Heart right ventricle (tissue), 16 donors: ENCODE measurements at regions of chr16 and their contacts with region 1.

Region 1: DNA sequence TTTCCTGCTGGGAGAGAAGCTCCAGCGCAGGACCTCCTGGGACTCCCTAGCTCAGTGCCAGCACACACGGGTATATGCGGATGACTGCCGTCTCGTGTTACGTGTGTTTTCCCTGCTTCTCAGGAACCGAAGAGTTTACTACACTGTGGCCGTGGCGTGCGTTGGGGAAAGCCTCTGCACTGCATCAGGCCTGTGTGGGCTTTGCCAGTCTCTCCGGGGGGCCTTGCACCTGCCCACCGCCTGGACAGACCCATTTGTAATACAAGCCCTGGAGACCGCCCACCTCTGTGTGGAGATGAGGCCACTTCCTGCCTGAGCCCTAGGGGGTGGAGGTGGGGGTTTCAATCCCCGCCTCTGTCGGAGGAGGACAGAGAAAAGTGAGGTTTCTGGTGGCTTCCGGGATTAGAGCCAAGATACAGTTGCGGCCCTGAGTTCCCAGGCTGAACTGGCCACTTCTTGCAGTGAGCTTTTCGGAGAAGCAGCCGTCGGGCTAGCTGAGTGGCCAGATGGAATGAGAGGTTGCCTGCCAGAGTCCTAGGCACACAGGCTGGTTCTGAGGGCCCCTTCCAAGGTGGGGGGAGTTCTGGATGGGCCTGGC is 43.4 kb upstream of the GSE1 start:
- DNase-seq: no peak
- ATAC-seq: no peak
- H3K4me3 ChIP-seq: peak overlapping the region in 1 of 10 donors; percentile 16
- H3K27ac ChIP-seq: peak overlapping the region in 2 of 10 donors; percentile 15 to 76
- H3K4me1 ChIP-seq: peaks cover 16 to 77% (median 33%) of the 10 kb centered on the region in 9 donors
- H3K27me3 ChIP-seq: no peaks in the 10 kb centered on the region
- CTCF ChIP-seq: no peak

Region 2: DNA sequence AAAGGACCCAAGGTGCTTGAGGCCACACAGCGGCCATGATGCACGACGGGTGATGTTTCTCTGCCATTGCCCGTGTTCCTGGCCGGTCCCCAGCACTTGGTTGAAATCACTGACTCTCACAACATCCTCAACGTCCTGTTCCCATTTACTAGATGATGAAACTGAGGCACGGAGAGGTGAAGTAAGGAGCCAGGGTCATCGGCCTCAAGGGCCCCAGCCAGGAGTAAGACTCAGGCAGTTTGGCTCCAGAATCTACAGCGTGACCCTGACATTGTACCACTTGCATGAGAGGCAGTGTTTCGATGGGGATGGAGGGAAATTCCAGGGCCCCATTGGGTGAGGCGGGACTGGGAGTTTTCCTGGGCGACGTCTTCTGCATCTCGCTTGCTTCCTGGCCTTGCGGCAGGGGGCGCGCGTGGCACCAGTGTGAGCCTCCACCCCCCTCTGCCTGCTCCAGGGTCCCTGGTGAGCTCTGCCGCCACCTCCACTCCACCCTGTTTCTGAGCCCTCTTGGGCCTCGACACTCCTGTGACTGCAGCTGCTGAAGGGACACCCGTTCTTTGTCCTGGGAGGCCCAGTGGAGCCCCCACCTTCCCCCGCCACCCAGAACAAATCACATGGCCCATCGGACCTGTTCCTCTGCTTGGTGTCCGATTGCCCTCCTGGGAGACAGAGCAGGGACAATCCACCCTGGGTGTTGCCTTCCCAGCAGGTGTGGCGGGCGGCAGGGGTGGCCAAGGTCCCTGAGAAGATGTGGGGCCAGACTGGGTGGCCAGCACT is 89.6 kb before region 1 on chr16:
- intact Hi-C with region 1: no loop called
- DNase-seq: peak in 1 of 2 donors; percentile 40
- ATAC-seq: peak in 6 of 8 donors; percentile 15 to 32 (median 28)
- H3K4me3 ChIP-seq: no peak overlapping the region
- H3K27ac ChIP-seq: no peak overlapping the region
- H3K4me1 ChIP-seq: peaks cover 0 to 3% (median 0%) of the 10 kb centered on the region in 9 donors
- H3K27me3 ChIP-seq: no peaks in the 10 kb centered on the region
- CTCF ChIP-seq: peak in 8 of 9 donors; percentile 11 to 52 (median 21)

Region 3: DNA sequence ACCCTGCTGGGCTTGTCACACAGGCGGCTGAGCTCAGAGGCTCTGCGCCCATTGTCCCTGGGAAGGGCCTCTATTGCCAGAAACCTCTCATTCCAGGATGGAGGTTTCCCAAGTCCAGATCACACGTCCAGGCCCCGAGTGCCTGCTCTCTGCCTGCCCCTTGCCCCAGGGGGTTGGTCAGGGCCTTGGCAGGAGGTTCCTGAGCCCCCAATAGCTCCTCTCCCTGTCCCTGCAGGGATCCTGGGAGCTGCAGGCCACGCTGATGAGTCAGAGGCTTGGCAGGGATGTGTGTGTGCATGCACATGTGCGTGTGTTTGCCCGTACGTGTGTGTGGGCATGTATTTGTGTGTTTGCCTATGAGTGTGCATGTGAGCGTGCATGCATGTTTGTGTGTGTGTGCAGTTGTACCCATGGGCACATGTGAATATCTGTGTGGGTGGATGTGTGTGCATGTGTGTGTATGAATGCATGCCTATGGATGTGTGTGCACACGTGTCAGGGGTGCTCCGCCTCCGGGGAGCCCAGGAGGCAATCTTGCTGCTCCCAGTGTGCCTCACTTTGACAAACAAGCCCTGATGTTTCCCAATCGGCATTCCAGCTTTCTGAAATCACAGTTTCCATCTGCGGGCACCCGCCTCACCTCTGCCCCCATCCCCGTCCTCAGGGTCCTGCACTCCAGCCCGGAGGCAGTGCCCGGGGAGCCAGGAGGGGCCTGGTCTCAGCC is 55.0 kb before region 1 on chr16:
- intact Hi-C with region 1: no loop called
- DNase-seq: peak; percentile 60 to 70
- ATAC-seq: peak; percentile 77 to 91 (median 86)
- H3K4me3 ChIP-seq: no peak overlapping the region
- H3K27ac ChIP-seq: peak overlapping the region in 8 of 10 donors; percentile 59 to 87 (median 74)
- H3K4me1 ChIP-seq: peaks cover 12 to 33% (median 25%) of the 10 kb centered on the region in 9 donors
- H3K27me3 ChIP-seq: no peaks in the 10 kb centered on the region
- CTCF ChIP-seq: no peak

Region 4: DNA sequence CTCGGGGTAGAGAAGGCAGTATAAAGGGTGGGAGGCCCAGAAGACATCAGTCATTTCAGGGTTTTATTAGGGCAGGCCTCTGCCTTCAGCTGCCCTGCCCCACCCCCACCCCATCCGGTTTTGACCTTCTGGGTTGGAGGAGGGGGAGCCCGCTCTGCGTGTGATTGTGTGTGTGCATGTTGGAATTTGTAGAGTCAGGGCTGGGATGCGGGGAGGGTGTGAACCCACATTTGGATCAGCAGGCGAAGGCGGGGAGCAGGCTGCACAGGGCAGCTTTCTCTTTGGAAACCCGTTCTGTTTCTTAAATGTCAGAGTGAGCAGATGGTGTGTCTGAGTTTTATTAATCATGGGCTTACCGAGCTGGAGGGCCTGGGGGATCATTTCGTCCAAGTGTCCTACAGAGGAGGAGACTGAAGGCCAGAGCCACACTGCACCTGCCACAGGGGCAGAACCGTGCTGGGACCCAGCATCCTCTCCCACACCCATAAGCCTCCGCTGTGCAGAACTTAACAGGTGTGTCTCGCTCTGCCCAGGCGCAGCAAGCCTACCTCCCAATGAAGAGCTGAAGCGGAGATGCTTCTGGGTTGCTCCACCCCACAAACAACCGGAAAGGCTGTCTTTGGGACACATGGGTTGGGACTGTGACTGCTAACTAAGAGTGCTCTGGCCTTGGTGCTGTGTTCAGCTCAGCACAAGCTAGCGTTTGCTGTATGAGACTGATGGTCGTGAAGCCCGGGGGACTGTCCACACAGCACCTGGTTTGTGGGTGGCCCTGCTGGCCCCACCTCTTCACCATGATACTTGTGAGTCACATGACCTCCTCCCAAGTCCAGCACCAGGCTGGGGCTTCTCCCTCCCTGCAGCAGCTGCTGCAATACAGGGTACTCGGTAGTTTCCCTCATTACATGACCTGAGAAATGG is 27.5 kb before region 1 on chr16:
- intact Hi-C with region 1: no loop called
- DNase-seq: no peak
- ATAC-seq: no peak
- H3K4me3 ChIP-seq: no peak overlapping the region
- H3K27ac ChIP-seq: no peak overlapping the region
- H3K4me1 ChIP-seq: peaks cover 0 to 22% (median 11%) of the 10 kb centered on the region in 9 donors
- H3K27me3 ChIP-seq: no peaks in the 10 kb centered on the region
- CTCF ChIP-seq: no peak

Region 5: GRCh38 chr16:85601730-85602401 is 32.2 kb after region 1 on chr16:
- intact Hi-C with region 1: loop called in 3 of 10 experiments (anchors 5 kb)
- DNase-seq: peak in 1 of 2 donors; percentile 60
- ATAC-seq: peak; percentile 26 to 85 (median 74)
- H3K4me3 ChIP-seq: no peak overlapping the region
- H3K27ac ChIP-seq: peak overlapping the region in 6 of 10 donors; percentile 15 to 49 (median 38)
- H3K4me1 ChIP-seq: peaks cover 3 to 39% (median 13%) of the 10 kb centered on the region in 9 donors
- H3K27me3 ChIP-seq: no peaks in the 10 kb centered on the region
- CTCF ChIP-seq: no peak

Region 6: DNA sequence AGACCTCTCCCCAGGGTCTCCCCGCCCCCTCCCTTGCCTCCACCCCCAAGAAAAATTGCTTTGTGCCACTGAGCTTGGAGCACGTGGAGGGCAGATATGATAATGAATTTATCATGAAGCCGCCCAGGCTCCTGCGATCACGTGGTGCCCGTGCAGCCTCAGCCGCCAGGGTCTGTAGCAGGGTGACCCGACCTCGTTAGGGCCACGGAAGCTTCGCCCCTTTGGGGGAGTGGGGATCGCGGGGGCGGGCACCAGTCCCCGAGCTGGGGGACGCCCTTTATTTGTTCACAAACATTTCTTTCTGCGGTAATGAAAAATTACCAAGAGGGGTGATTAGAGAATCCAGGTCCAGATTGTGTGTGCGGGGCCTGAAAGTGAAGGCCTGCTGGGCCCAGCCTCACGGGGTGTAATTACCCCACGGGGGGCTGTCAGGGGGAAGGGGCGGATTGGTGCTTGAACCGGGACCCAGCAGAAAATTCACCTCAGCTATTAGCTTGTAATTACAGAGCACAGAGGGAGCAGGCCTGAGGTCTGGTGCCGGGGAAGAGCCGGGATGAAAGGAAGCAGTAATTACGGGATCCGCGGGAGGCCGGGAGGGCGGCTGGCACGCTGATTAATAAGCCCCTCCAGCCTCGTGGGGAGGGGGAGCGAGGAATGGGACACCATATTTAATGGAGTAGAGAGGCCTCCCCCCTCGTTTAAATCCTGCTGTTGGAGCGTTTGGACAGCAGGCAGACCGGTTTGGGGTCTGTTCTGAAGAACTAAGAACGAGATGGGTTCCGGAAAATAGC is 56.7 kb after region 1 on chr16:
- intact Hi-C with region 1: no loop called
- DNase-seq: no peak
- ATAC-seq: peak in 5 of 8 donors; percentile 10 to 49 (median 32)
- H3K4me3 ChIP-seq: peak overlapping the region in 5 of 10 donors; percentile 18 to 39 (median 30)
- H3K27ac ChIP-seq: peak overlapping the region in 9 of 10 donors; percentile 52 to 94 (median 90)
- H3K4me1 ChIP-seq: peaks cover 26 to 93% (median 59%) of the 10 kb centered on the region in 9 donors
- H3K27me3 ChIP-seq: no peaks in the 10 kb centered on the region
- CTCF ChIP-seq: no peak